CD4-positive, alpha-beta memory T cell (primary cell): ENCODE measurements at regions of chr11 and their contacts with region 1.

Region 1: DNA sequence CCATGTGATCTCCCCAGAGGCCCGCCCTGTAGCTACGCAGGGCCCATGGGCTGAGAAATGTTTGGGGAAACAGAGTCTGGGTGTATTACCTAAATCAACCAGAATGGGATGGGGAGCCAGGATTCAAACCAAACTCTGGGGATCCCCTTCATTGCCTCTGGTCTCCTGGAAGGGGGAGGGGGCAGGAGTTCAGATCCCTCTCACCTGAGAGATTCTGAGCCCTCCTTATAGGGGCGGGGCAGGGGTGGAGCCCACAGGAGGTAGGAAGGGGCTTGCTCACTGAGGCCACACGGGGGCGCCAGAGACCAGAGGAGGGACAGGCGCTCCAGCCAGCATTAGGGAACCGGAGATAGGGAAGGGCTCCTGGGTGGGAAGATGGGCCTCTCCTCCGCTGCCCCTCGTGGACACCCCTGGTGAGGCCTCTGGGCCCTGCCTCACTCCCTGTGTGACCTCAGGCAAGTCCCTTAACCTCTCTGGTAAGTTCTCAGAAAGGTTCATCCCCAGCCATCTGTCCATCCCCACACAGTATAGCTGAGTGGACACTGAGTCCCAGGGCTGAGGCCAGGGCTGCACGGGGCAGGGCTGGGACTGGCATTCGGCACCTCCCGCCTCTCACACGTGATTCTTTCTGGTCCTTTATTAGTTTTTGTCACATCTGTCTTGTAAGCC is 2.7 kb upstream of the CDC42BPG start:
- DNase-seq: peak; percentile 84 to 90 (median 88)
- H3K4me3 ChIP-seq: no peak overlapping the region
- H3K4me3 Mint-ChIP-seq: peak overlapping the region in 4 of 8 donors; percentile 20 to 62 (median 34)
- H3K27ac ChIP-seq: peak overlapping the region; percentile 23
- H3K27ac Mint-ChIP-seq: peak overlapping the region; percentile 11 to 89 (median 82)
- H3K4me1 ChIP-seq: peaks cover 65% of the 10 kb centered on the region
- H3K4me1 Mint-ChIP-seq: peaks cover 35 to 64% (median 49%) of the 10 kb centered on the region in 4 donors
- H3K27me3 ChIP-seq: no peaks in the 10 kb centered on the region
- H3K27me3 Mint-ChIP-seq: no peaks in the 10 kb centered on the region

Region 2: DNA sequence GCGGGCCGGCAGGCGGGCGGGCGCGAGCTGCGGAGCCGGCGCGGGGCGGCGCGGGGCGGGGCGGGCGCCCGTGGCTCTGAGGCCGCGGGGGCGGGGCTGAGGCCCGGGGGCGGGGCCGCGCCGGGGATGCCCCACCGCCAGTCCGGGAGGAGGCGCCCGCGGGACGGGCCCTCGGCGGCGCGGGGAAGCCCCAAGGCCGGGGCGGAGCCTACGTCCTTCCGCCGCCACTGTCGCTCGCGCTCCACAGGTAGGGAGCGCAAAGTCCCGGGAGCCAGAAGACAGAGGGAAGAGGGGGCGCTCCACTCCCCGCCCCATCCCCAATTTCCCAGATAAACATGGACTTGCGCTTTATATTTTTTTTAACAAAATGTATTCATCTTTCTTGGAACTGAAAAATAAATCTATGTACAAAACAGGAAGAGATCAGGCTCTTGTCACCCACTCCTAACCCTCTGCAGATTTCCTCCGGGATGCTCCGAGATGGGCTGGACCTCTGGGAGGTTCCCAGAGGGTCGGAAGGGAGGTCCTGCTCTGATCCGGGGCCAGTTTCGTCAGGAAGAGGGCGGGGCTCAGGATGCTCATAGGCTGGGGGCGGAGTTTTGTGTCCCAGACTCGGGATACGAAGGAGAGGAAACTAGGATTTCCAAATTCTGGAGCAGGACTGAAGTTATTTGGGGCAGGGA is 43.8 kb before region 1 on chr11 and contains the start of gene MAP4K2:
- CTCF ChIA-PET with region 1: interaction called, 4 read pairs
- POLR2A ChIA-PET with region 1: interaction called, 4 read pairs
- intact Hi-C with region 1: loop called (anchors 5 kb)
- DNase-seq: peak; percentile 84 to 91 (median 89)
- H3K4me3 ChIP-seq: peak within 1 kb of the TSS; percentile 79
- H3K4me3 Mint-ChIP-seq: peak within 1 kb of the TSS; percentile 87 to 92 (median 90)
- H3K27ac ChIP-seq: peak within 1 kb of the TSS; percentile 93
- H3K27ac Mint-ChIP-seq: peak within 1 kb of the TSS; percentile 94 to 97 (median 96)
- H3K4me1 ChIP-seq: peaks cover 35% of the 10 kb centered on the region
- H3K4me1 Mint-ChIP-seq: peaks cover 9 to 48% (median 24%) of the 10 kb centered on the region in 4 donors
- H3K27me3 ChIP-seq: no peaks in the 10 kb centered on the region
- H3K27me3 Mint-ChIP-seq: no peaks in the 10 kb centered on the region
- total RNA-seq, gene MAP4K2: 122 to 128 TPM

Region 3: GRCh38 chr11:64864473-64865285 is 17.5 kb after region 1 on chr11:
- CTCF ChIA-PET with region 1: interaction called, 252 read pairs
- POLR2A ChIA-PET with region 1: interaction called, 740 read pairs
- intact Hi-C with region 1: loop called (anchors 1 kb)
- DNase-seq: peak in 2 of 5 donors; percentile 24 to 64
- H3K4me3 ChIP-seq: peak overlapping the region; percentile 40 to 59
- H3K4me3 Mint-ChIP-seq: peak overlapping the region; percentile 64 to 91 (median 82)
- H3K27ac ChIP-seq: peak overlapping the region; percentile 68
- H3K27ac Mint-ChIP-seq: peak overlapping the region; percentile 76 to 99 (median 95)
- H3K4me1 ChIP-seq: peaks cover 99% of the 10 kb centered on the region
- H3K4me1 Mint-ChIP-seq: peaks cover 53 to 95% (median 78%) of the 10 kb centered on the region in 4 donors
- H3K27me3 ChIP-seq: no peaks in the 10 kb centered on the region
- H3K27me3 Mint-ChIP-seq: no peaks in the 10 kb centered on the region

Region 4: DNA sequence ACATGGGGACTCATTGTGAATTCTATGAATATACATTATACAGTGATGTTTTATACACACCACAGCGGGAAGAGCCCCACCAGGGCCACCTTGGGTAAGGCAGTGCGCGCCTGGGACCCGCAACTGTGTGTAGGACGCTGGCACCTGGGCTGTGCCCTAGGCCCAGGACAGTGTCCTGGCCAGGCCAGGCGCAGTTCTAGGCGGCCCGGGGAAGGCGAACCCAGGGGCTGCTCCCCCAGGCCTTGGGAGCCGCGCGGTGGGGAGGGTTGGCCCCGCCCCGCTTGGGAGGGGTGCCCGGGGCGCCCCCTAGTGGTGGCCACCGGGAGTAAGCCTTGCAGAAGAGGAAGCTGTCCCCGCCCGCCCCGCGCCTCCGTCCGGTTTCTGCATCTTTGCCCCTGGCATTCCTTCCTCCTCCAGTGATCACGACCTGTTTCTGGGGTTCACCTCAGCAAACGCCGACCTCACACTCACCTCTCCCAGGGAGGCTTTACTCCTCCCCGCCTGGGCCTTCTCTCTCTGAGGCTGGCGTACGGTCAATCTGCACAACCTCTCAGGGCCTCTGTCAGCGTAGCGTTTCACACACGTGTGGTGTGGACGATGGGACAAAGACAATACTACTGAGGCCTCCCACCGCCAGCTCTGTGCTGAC is 40.7 kb after region 1 on chr11:
- CTCF ChIA-PET with region 1: interaction called, 1,245 read pairs
- POLR2A ChIA-PET with region 1: interaction called, 2,105 read pairs
- intact Hi-C with region 1: loop called (anchors 1 kb)
- DNase-seq: peak; percentile 74 to 86 (median 83)
- H3K4me3 ChIP-seq: peak overlapping the region in 1 of 2 donors; percentile 19
- H3K4me3 Mint-ChIP-seq: peak overlapping the region; percentile 68 to 88 (median 82)
- H3K27ac ChIP-seq: peak overlapping the region; percentile 45
- H3K27ac Mint-ChIP-seq: peak overlapping the region; percentile 54 to 94 (median 89)
- H3K4me1 ChIP-seq: peaks cover 33% of the 10 kb centered on the region
- H3K4me1 Mint-ChIP-seq: peaks cover 17 to 42% (median 24%) of the 10 kb centered on the region in 4 donors
- H3K27me3 ChIP-seq: no peaks in the 10 kb centered on the region
- H3K27me3 Mint-ChIP-seq: no peaks in the 10 kb centered on the region

Region 5: GRCh38 chr11:64924102-64924851 is 77.1 kb after region 1 on chr11 and contains the start of gene PPP2R5B:
- CTCF ChIA-PET with region 1: interaction called, 4 read pairs
- POLR2A ChIA-PET with region 1: interaction called, 10 read pairs
- intact Hi-C with region 1: loop called (anchors 1 kb)
- DNase-seq: peak; percentile 87 to 95 (median 90)
- H3K4me3 ChIP-seq: peak within 1 kb of the TSS; percentile 61 to 85
- H3K4me3 Mint-ChIP-seq: peak within 1 kb of the TSS; percentile 93 to 99 (median 96)
- H3K27ac ChIP-seq: peak within 1 kb of the TSS; percentile 78
- H3K27ac Mint-ChIP-seq: peak within 1 kb of the TSS; percentile 98 to 100 (median 99)
- H3K4me1 ChIP-seq: peaks cover 20% of the 10 kb centered on the region
- H3K4me1 Mint-ChIP-seq: peaks cover 9 to 15% (median 11%) of the 10 kb centered on the region in 4 donors
- H3K27me3 ChIP-seq: no peaks in the 10 kb centered on the region
- H3K27me3 Mint-ChIP-seq: no peaks in the 10 kb centered on the region
- total RNA-seq, gene PPP2R5B: 14.0 to 15.8 TPM